ENCODE measurements at regions of chr11 and their contacts with region 1.

Region 1: GRCh38 chr11:9137293-9138132 is 46.1 kb upstream of the SCUBE2 start:
- H3K4me3 ChIP-seq: no peak overlapping the region
- H3K27ac ChIP-seq: no peak overlapping the region
- H3K4me1 ChIP-seq: peaks cover 15% of the 10 kb centered on the region
- CTCF ChIP-seq: peak; percentile 64

Region 2: GRCh38 chr11:8911029-8911826 is 226.3 kb before region 1 on chr11 and contains the start of gene AKIP1:
- CTCF ChIA-PET with region 1: interaction called, 15 read pairs
- POLR2A ChIA-PET with region 1: interaction called, 3 read pairs
- H3K4me3 ChIP-seq: peak within 1 kb of the TSS; percentile 85
- H3K27ac ChIP-seq: peak within 1 kb of the TSS; percentile 86
- H3K4me1 ChIP-seq: no peaks in the 10 kb centered on the region
- CTCF ChIP-seq: peak; percentile 7; the same call in 1 of the 2 replicates

Region 3: GRCh38 chr11:9053316-9054035 is 84.0 kb before region 1 on chr11:
- CTCF ChIA-PET with region 1: interaction called, 12 read pairs
- POLR2A ChIA-PET with region 1: no interaction called
- H3K4me3 ChIP-seq: no peak overlapping the region
- H3K27ac ChIP-seq: no peak overlapping the region
- H3K4me1 ChIP-seq: no peaks in the 10 kb centered on the region
- CTCF ChIP-seq: no peak

Region 4: DNA sequence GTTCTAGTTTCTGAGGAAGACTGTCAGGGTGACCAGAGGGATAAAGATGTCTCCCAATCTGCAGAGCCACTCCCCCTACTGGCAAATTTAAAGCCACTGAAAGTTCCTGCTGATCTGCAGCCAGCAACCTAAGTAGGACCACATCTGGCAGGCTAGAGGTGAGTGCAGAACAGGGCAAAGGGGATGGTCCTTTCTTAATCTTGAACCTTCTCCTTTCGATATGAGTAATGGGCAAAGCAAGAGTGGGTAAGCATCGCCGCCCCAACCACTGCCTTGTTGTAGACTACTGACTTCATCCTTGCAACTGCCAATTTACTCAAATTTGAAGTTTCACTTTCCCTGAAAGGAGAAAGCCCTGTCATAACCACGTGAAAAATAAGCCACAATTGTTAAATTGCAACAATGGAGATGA is 76.8 kb before region 1 on chr11:
- CTCF ChIA-PET with region 1: interaction called, 12 read pairs
- POLR2A ChIA-PET with region 1: interaction called, 3 read pairs
- H3K4me3 ChIP-seq: no peak overlapping the region
- H3K27ac ChIP-seq: no peak overlapping the region
- H3K4me1 ChIP-seq: no peaks in the 10 kb centered on the region
- CTCF ChIP-seq: no peak

Region 5: GRCh38 chr11:9170450-9170849 is 32.9 kb after region 1 on chr11:
- CTCF ChIA-PET with region 1: interaction called, 11 read pairs
- POLR2A ChIA-PET with region 1: interaction called, 4 read pairs
- H3K4me3 ChIP-seq: no peak overlapping the region
- H3K27ac ChIP-seq: no peak overlapping the region
- H3K4me1 ChIP-seq: no peaks in the 10 kb centered on the region
- CTCF ChIP-seq: no peak

Region 6: DNA sequence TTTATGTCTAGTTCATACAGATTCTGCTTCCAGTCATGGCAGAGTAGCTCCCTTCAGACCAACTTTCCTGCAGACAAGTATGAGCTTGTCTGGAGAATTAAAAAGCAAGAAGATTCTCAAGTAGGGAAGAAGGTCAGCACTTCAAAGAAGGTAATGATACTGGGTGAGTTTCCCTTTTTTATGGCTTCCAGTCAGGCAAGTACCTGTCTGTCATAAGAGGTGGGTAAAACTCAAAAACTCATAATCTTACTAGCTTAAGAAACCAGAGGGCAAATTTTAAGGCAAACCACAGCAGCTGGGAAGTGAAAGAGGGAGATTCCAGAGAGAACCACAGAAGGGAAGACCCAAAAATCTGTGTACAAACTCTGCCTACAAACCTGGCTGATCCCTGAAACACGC is 73.4 kb after region 1 on chr11:
- CTCF ChIA-PET with region 1: no interaction called
- POLR2A ChIA-PET with region 1: no interaction called
- H3K4me3 ChIP-seq: no peak overlapping the region
- H3K27ac ChIP-seq: peak overlapping the region; percentile 7; the same call in 1 of the 2 replicates
- H3K4me1 ChIP-seq: no peaks in the 10 kb centered on the region; the same call in 1 of the 2 replicates
- CTCF ChIP-seq: no peak

Measured in HEK293 (cell line).